ENCODE measurements at regions of chr17 and their contacts with region 1.

Region 1: DNA sequence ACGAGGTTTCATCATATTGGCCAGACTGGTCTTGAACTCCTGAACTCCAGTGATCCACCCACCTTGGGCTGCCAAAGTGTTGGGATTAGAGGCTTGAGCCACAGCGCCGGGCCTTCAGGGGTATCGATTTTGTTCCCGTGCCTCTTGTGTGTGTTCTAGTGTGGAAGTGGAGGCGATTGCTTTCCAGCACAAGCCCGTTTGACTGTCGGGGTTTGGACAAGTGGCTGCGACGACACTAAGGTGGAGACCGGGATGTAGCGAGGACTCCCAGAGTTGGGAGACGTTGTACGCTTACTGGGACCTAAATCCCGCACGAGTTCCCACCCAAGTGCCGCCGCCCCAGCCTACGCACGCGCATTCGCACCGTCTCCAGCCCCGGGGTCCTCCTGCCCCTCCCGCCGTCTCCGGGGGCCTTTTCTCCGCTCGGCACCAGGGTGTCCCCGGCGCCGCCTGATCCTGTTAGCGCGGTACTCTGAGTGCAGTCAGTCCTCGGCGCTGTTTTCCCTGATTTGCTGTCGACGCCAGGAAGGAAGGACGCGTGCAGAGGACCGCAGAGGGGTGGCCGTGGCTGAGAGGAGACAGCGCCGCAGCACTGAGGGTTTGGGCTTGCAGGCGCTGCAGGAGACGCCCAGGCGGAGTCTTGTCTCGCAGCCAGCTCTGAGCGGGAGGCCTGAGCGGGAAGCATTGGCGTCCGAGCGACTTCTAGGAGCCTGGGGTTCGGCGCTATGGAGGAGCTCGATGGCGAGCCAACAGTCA is at the start of gene NUP85:
- DNase-seq: peak; percentile 100
- H3K4me3 ChIP-seq: peak within 1 kb of the TSS; percentile 70 to 87
- H3K27ac ChIP-seq: peak within 1 kb of the TSS; percentile 97 to 98
- H3K4me1 ChIP-seq: peaks cover 4 to 6% of the 10 kb centered on the region in 2 experiments; a peak in 1 of 4 replicates
- H3K27me3 ChIP-seq: no peaks in the 10 kb centered on the region
- CTCF ChIP-seq: no peak
- EP300 ChIP-seq: no peak
- RAD21 ChIP-seq: no peak
- polyA plus RNA-seq, gene NUP85: 80.5 and 99.8 TPM in 2 replicates

Region 2: GRCh38 chr17:75124041-75124818 is 81.0 kb before region 1 on chr17:
- CTCF ChIA-PET with region 1: interaction called, 231 read pairs
- POLR2A ChIA-PET with region 1: no interaction called
- DNase-seq: no peak
- H3K4me3 ChIP-seq: no peak overlapping the region
- H3K27ac ChIP-seq: no peak overlapping the region
- H3K4me1 ChIP-seq: peaks cover 4 to 7% of the 10 kb centered on the region in 2 experiments; a peak in 1 of 4 replicates
- H3K27me3 ChIP-seq: no peaks in the 10 kb centered on the region
- CTCF ChIP-seq: no peak
- EP300 ChIP-seq: peak in 1 of 2 experiments; percentile 35; a peak in 1 of 4 replicates
- RAD21 ChIP-seq: no peak

Region 3: GRCh38 chr17:75147878-75148546 is 57.2 kb before region 1 on chr17:
- CTCF ChIA-PET with region 1: interaction called, 10 read pairs
- POLR2A ChIA-PET with region 1: interaction called, 3 read pairs
- DNase-seq: no peak
- H3K4me3 ChIP-seq: no peak overlapping the region
- H3K27ac ChIP-seq: no peak overlapping the region
- H3K4me1 ChIP-seq: no peaks in the 10 kb centered on the region; a peak in 2 of 4 replicates
- H3K27me3 ChIP-seq: no peaks in the 10 kb centered on the region
- CTCF ChIP-seq: no peak
- EP300 ChIP-seq: no peak
- RAD21 ChIP-seq: no peak

Region 4: GRCh38 chr17:75182569-75183450 is 22.4 kb before region 1 on chr17 and contains the start of gene SUMO2:
- CTCF ChIA-PET with region 1: interaction called, 50 read pairs
- POLR2A ChIA-PET with region 1: no interaction called
- DNase-seq: peak; percentile 100
- H3K4me3 ChIP-seq: peak within 1 kb of the TSS; percentile 67 to 93
- H3K27ac ChIP-seq: peak within 1 kb of the TSS; percentile 90 to 99
- H3K4me1 ChIP-seq: peaks cover 3 to 6% of the 10 kb centered on the region in 2 experiments; a peak in 2 of 4 replicates
- H3K27me3 ChIP-seq: no peaks in the 10 kb centered on the region
- CTCF ChIP-seq: no peak
- EP300 ChIP-seq: 0 out of 4 replicates have a peak, but pooled peaks of 1 of the 2 experiments have one; percentile 17
- RAD21 ChIP-seq: no peak
- polyA plus RNA-seq, gene SUMO2: 85.5 and 114 TPM in 2 replicates

Region 5: DNA sequence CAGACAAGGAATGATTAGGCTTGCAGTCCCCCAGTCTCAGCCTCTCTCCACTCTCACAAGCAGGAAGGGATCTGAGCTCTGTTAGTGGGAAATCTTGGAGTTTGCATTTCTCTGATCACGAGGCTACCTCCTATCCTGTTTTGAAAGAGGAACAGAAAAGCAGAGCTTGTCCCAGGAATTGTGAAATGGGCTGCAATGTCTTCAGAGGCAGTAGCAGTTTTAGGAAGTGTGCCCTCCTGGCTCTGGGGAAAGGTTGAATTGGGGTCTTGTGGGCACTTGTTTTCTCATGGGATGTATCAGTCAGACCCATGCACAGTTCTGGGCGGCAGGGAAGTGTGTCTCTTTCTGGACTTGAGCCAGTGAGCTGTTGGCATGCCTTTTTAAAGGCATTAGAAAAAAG is 23.1 kb after region 1 on chr17:
- CTCF ChIA-PET with region 1: interaction called, 34 read pairs
- POLR2A ChIA-PET with region 1: interaction called, 5 read pairs
- DNase-seq: no peak
- H3K4me3 ChIP-seq: no peak overlapping the region
- H3K27ac ChIP-seq: no peak overlapping the region
- H3K4me1 ChIP-seq: no peaks in the 10 kb centered on the region
- H3K27me3 ChIP-seq: no peaks in the 10 kb centered on the region
- CTCF ChIP-seq: no peak
- EP300 ChIP-seq: no peak
- RAD21 ChIP-seq: no peak

Measured in SK-N-SH (cell line).